Activated B cell treated with CpG ODN at 0.5 μM for 24 hours (primary cell): ENCODE measurements at regions of chr6 and their contacts with region 1.

Region 1: DNA sequence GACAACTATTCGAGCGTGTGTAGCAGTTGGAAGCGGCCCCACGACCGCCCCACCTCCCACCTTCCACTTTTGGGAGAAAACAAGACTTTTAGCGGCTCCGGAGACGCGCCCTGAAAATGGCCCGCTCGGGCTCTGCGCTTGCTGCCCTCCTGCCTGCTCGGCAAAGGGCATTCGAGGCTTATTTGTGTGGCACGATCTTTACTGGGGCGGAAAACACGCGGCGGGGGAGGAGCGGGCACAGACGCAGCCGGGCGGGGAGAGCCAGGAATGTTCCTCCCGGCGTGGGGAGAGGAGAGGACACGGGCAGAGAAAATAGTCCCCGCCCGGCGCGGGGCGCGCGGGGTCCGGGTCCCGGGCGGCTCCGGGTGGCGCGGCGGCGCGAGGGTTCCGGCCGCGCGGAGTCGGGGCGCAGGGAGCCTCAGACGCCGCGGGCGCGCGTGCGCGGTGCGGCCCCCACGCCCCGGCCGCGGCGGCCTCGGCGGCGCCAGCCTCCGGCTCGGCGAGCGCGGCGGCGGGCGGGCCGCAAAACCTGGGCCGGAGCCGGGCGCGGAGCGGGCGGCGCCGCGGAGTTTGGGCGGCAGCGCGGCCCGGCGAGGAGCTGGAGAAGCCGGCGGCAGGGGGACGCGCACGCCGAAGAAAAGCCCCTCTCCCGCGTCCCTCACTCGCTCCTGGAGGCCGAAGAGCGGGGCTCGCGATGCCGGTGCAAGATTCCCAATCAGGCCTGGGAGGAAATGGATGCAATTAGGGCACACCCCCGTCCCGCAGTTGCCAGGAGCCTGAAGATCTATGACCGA is 90.0 kb upstream of the ARID1B start:
- DNase-seq: peak; percentile 86
- ATAC-seq: peak; percentile 79
- H3K4me3 Mint-ChIP-seq: peak overlapping the region; percentile 94
- H3K27ac Mint-ChIP-seq: peak overlapping the region; percentile 98
- H3K4me1 Mint-ChIP-seq: peaks cover 62% of the 10 kb centered on the region
- H3K27me3 Mint-ChIP-seq: no peaks in the 10 kb centered on the region
- CTCF ChIP-seq: no peak

Region 2: DNA sequence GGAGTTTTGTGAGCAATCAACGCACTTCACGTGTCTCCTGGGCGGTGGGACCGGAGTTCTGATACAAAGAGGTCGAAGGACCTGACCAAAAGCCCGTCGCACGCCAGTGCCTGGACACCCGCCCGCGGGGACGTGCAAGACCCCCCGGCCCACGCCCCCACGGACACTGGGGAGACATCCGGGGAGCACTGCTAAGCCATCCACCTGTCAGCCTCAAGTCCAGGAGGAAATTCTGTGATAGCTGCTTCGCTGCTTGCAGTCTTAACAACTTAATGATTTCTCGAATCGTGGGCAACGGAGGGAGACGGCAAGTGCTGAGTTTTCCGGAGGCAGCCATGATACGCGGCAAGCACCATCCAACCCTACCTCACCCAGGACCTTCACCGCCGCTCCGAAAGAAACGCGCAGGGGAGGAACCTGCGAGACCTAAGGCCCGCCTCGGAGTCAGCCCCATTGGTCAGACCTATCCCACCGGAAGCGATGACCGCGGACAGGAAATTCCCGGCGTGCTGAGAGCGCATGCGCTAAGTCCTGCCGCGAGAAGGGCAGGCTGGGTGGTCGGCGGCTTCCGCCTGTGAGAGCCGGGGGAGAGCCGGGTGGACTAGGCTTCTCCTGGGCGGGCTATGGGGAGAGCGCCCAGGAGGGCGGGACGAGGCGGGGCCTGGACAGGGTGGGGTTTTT is 1373.0 kb before region 1 on chr6 and contains the start of gene TFB1M:
- CTCF ChIA-PET with region 1: no interaction called
- POLR2A ChIA-PET with region 1: no interaction called
- intact Hi-C with region 1: loop called (anchors 5 kb)
- DNase-seq: peak; percentile 90
- ATAC-seq: peak; percentile 94
- H3K4me3 Mint-ChIP-seq: peak within 1 kb of the TSS; percentile 97
- H3K27ac Mint-ChIP-seq: peak within 1 kb of the TSS; percentile 93
- H3K4me1 Mint-ChIP-seq: peaks cover 28% of the 10 kb centered on the region
- H3K27me3 Mint-ChIP-seq: no peaks in the 10 kb centered on the region
- CTCF ChIP-seq: no peak
- total RNA-seq, gene TFB1M: 35.2 and 41.5 TPM in 2 replicates

Region 3: DNA sequence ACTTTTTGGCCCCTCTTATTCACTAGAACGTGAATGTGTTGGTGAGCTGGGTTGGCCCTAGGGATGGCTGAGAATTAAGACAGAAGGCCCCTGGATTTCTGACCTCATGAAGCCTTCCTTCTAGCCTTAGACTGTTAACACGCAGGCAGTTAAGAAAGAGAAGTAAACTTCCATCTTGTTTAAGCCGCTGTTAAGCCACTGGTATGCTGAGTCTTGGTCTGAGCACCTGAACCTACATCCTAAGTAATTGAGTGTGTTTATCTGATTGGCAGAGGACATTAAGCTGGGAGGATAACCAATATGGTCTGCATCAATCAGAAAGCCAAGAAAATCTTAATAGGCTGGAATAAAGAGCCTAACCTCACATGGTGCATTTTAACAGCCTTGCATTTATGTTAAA is 445.0 kb before region 1 on chr6:
- CTCF ChIA-PET with region 1: no interaction called
- POLR2A ChIA-PET with region 1: no interaction called
- intact Hi-C with region 1: no loop called
- DNase-seq: no peak
- ATAC-seq: no peak
- H3K4me3 Mint-ChIP-seq: no peak overlapping the region
- H3K27ac Mint-ChIP-seq: no peak overlapping the region
- H3K4me1 Mint-ChIP-seq: no peaks in the 10 kb centered on the region
- H3K27me3 Mint-ChIP-seq: no peaks in the 10 kb centered on the region
- CTCF ChIP-seq: no peak

Region 4: DNA sequence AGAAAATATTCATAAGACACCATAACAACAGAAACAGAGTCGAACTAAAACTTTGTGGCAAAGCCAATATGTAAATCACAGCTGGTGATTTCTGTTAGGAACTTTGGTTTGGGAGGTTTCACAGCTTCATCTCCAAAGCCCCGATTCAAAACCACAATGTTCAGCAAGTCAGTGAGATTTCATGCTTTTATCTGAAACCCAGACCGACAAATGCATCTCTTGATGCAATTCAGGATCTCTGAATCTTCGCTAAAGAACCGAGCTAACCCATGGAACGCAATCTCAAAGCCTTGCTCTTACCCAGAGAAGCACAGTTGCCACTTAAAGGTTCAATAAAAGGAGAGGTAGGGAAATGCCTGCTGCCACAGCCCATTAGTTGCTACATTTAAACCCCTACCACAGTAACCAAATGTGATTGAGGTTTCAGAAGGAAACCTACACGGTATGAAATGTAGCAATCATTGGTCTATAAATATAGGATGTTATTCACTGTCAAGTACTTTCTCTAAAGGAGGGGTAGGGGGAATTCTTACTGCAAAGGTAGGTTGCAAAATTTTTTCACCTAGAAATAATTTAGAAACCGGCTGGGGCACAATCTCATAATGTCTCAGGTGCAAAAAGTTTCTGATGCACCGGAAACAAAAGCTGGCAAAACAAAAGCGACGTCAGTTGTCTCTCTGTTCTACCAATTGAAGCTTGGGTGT is 291.0 kb before region 1 on chr6:
- CTCF ChIA-PET with region 1: no interaction called
- POLR2A ChIA-PET with region 1: no interaction called
- intact Hi-C with region 1: loop called (anchors 10 kb)
- DNase-seq: no peak
- ATAC-seq: peak; percentile 62
- H3K4me3 Mint-ChIP-seq: peak overlapping the region; percentile 68
- H3K27ac Mint-ChIP-seq: peak overlapping the region; percentile 84
- H3K4me1 Mint-ChIP-seq: peaks cover 76% of the 10 kb centered on the region
- H3K27me3 Mint-ChIP-seq: no peaks in the 10 kb centered on the region
- CTCF ChIP-seq: no peak

Region 5: DNA sequence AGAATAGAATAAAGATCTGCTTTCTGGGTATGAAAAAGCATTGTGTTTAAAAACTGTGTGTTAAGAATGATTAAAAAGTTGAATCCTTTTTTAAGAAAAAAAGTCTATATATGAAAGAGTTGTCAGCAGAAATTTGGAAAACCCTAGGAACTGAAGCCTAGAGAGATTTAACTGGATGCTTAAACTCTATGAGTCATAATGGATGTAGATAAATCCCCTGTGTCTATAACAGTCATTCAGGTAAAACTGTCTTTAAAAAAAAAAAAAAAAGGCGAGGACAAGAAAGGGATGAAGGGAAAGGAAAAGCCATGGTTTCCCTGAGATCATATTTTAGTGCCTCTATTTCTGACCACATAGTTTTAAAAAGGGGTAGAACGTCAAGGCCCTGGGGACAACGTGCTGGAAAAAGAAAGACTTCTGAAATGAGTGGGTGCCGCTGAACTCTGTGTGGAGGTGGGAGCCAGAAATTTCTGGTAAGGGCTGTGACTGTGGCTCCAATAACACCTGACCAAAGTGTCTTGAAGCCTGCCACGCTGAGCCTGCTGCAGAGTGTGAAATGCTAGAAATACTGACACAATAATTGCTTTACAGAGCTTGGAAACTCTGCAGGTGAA is 212.6 kb before region 1 on chr6:
- CTCF ChIA-PET with region 1: no interaction called
- POLR2A ChIA-PET with region 1: no interaction called
- intact Hi-C with region 1: no loop called
- DNase-seq: no peak
- ATAC-seq: peak; percentile 31
- H3K4me3 Mint-ChIP-seq: no peak overlapping the region
- H3K27ac Mint-ChIP-seq: no peak overlapping the region
- H3K4me1 Mint-ChIP-seq: peaks cover 9% of the 10 kb centered on the region
- H3K27me3 Mint-ChIP-seq: no peaks in the 10 kb centered on the region
- CTCF ChIP-seq: no peak

Region 6: GRCh38 chr6:156634951-156635371 is 52.2 kb before region 1 on chr6:
- CTCF ChIA-PET with region 1: interaction called, 5 read pairs
- POLR2A ChIA-PET with region 1: interaction called, 17 read pairs
- intact Hi-C with region 1: loop called (anchors 1 kb)
- DNase-seq: no peak
- ATAC-seq: no peak
- H3K4me3 Mint-ChIP-seq: peak overlapping the region; percentile 79
- H3K27ac Mint-ChIP-seq: peak overlapping the region; percentile 95
- H3K4me1 Mint-ChIP-seq: peaks cover 54% of the 10 kb centered on the region
- H3K27me3 Mint-ChIP-seq: no peaks in the 10 kb centered on the region
- CTCF ChIP-seq: no peak

Region 7: GRCh38 chr6:156719720-156720563 is 32.8 kb after region 1 on chr6:
- CTCF ChIA-PET with region 1: interaction called, 6 read pairs
- POLR2A ChIA-PET with region 1: interaction called, 73 read pairs
- intact Hi-C with region 1: loop called (anchors 1 kb)
- DNase-seq: peak; percentile 78
- ATAC-seq: peak; percentile 81
- H3K4me3 Mint-ChIP-seq: peak overlapping the region; percentile 82
- H3K27ac Mint-ChIP-seq: peak overlapping the region; percentile 95
- H3K4me1 Mint-ChIP-seq: peaks cover 52% of the 10 kb centered on the region
- H3K27me3 Mint-ChIP-seq: no peaks in the 10 kb centered on the region
- CTCF ChIP-seq: no peak

Region 8: GRCh38 chr6:156767603-156768467 is 80.6 kb after region 1 on chr6:
- CTCF ChIA-PET with region 1: interaction called, 3 read pairs
- POLR2A ChIA-PET with region 1: interaction called, 11 read pairs
- intact Hi-C with region 1: no loop called
- DNase-seq: no peak
- ATAC-seq: peak; percentile 91
- H3K4me3 Mint-ChIP-seq: peak overlapping the region; percentile 30
- H3K27ac Mint-ChIP-seq: peak overlapping the region; percentile 84
- H3K4me1 Mint-ChIP-seq: peaks cover 28% of the 10 kb centered on the region
- H3K27me3 Mint-ChIP-seq: no peaks in the 10 kb centered on the region
- CTCF ChIP-seq: no peak